ENCODE measurements at regions of chr15 and their contacts with region 1.

Region 1: DNA sequence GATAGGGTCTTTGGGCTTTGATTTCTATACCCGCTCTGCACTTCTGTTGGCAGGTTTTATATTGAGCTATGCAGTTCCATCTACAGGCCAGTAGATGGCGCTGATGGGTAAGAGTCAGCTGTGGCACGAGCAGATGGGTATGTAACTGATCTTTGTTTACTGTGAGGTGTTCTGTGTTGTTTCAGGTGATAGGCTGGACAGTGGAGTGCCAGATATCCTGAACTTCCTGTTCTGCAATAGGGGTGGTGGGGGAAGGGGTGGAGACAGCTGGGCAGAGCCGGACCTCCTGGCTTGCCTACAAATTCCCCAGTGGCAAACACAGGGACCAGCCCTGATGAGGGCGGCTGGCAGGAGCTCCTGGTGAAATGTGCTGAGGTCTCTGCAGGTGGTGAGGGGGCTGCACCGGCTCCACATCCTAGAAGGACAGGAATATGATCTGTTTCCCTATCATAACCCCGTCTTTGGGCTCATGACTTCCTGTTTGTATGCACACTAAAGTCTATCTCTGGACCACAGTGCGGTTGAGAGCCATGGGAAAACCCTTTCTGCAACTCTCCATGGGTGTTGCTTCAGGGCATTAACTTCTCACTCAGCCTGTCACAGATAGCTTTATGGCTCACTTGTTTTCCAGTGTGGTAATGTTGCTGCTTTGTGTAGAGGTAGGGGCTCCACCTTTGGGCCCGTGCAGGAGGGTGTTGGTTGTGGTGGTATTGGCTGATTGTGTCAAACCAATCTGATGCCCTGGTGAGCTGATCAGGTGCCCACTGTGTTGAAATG is 13.4 kb upstream of the FAM98B start:
- DNase-seq: peak in 8 of 9 experiments; percentile 24 to 84 (median 51)
- ATAC-seq: peak; percentile 99
- H3K4me3 ChIP-seq: no peak overlapping the region
- H3K4me3 Mint-ChIP-seq: no peak overlapping the region
- H3K27ac ChIP-seq: no peak overlapping the region
- H3K27ac Mint-ChIP-seq: no peak overlapping the region
- H3K4me1 ChIP-seq: peaks cover 4% of the 10 kb centered on the region
- H3K4me1 Mint-ChIP-seq: peaks cover 3% of the 10 kb centered on the region
- H3K27me3 ChIP-seq: no peaks in the 10 kb centered on the region
- H3K27me3 Mint-ChIP-seq: peaks cover 28% of the 10 kb centered on the region
- CTCF ChIP-seq: peak; percentile 98

Region 2: GRCh38 chr15:38427380-38427779 is 13.2 kb before region 1 on chr15:
- CTCF ChIA-PET with region 1: interaction called, 23 read pairs
- POLR2A ChIA-PET with region 1: no interaction called
- intact Hi-C with region 1: no loop called
- DNase-seq: peak in 1 of 9 experiments; percentile 2
- ATAC-seq: no peak
- H3K4me3 ChIP-seq: no peak overlapping the region
- H3K4me3 Mint-ChIP-seq: no peak overlapping the region
- H3K27ac ChIP-seq: no peak overlapping the region
- H3K27ac Mint-ChIP-seq: no peak overlapping the region
- H3K4me1 ChIP-seq: no peaks in the 10 kb centered on the region
- H3K4me1 Mint-ChIP-seq: no peaks in the 10 kb centered on the region
- H3K27me3 ChIP-seq: peaks cover 0 to 2% of the 10 kb centered on the region in 2 experiments
- H3K27me3 Mint-ChIP-seq: peaks cover 13% of the 10 kb centered on the region
- CTCF ChIP-seq: no peak

Region 3: DNA sequence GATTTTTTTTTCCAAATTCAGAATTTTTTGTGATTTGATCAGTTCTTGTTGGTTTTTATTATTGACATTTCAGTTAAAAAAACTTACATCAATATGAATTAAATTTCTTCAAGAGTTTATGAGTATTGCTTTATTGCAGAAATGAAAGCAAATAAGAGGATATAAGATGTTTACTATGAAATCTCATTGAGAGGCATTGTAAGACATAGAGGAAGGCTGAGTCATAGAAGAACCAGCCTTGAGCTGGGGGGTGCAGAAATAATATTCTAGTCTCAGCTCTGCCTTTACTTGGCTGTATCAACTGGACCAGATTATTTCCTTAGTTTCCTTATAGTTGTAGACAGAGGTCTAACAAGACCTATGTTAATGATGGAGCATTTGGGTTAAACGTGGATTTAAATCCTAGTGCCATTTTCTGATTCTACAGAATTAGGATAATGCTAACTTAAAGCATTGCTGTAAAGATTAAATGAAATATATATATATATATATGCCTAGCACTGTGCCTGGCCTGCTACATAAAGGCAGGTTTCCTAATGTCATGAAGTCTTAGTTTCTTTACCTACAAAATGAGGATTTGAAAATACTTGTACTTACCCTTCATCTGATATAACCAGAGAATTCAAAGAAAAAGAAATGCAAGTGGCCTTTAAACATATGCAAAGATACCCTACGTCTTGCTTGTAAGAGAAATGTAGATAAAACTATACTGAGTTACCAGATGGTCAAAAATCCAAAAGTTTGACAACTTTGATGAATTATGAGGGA is 20.7 kb after region 1 on chr15:
- CTCF ChIA-PET with region 1: interaction called, 14 read pairs
- POLR2A ChIA-PET with region 1: no interaction called
- intact Hi-C with region 1: no loop called
- DNase-seq: no peak
- ATAC-seq: no peak
- H3K4me3 ChIP-seq: no peak overlapping the region
- H3K4me3 Mint-ChIP-seq: no peak overlapping the region
- H3K27ac ChIP-seq: no peak overlapping the region
- H3K27ac Mint-ChIP-seq: no peak overlapping the region
- H3K4me1 ChIP-seq: peaks cover 11% of the 10 kb centered on the region
- H3K4me1 Mint-ChIP-seq: peaks cover 49% of the 10 kb centered on the region
- H3K27me3 ChIP-seq: no peaks in the 10 kb centered on the region
- H3K27me3 Mint-ChIP-seq: no peaks in the 10 kb centered on the region
- CTCF ChIP-seq: no peak

Region 4: DNA sequence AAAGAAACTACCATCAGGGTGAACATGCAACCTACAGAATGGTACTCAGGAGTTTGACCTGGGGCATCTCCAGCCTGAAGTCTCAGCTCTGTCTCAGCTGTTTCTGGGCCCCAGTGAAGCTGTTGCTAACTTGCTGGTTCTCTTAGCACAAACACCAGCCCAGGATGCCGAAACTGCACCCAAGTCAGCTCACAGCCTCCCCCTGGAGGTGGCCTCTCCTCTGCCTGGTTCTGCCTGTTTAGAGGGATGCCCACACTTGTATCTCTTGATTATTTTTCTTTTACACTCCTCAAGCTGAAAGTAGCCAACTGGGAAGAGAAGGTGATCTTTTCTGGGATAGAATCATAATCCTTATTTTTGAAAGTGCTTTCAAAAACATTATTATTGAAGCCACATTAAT is 413.1 kb after region 1 on chr15:
- CTCF ChIA-PET with region 1: interaction called, 10 read pairs
- POLR2A ChIA-PET with region 1: no interaction called
- intact Hi-C with region 1: loop called in 1 of 2 experiments (anchors 1 kb)
- DNase-seq: peak in 7 of 9 experiments; percentile 2 to 51 (median 31)
- ATAC-seq: no peak
- H3K4me3 ChIP-seq: no peak overlapping the region
- H3K4me3 Mint-ChIP-seq: no peak overlapping the region
- H3K27ac ChIP-seq: no peak overlapping the region
- H3K27ac Mint-ChIP-seq: no peak overlapping the region
- H3K4me1 ChIP-seq: no peaks in the 10 kb centered on the region
- H3K4me1 Mint-ChIP-seq: no peaks in the 10 kb centered on the region
- H3K27me3 ChIP-seq: no peaks in the 10 kb centered on the region
- H3K27me3 Mint-ChIP-seq: peaks cover 23% of the 10 kb centered on the region
- CTCF ChIP-seq: no peak

Region 5: DNA sequence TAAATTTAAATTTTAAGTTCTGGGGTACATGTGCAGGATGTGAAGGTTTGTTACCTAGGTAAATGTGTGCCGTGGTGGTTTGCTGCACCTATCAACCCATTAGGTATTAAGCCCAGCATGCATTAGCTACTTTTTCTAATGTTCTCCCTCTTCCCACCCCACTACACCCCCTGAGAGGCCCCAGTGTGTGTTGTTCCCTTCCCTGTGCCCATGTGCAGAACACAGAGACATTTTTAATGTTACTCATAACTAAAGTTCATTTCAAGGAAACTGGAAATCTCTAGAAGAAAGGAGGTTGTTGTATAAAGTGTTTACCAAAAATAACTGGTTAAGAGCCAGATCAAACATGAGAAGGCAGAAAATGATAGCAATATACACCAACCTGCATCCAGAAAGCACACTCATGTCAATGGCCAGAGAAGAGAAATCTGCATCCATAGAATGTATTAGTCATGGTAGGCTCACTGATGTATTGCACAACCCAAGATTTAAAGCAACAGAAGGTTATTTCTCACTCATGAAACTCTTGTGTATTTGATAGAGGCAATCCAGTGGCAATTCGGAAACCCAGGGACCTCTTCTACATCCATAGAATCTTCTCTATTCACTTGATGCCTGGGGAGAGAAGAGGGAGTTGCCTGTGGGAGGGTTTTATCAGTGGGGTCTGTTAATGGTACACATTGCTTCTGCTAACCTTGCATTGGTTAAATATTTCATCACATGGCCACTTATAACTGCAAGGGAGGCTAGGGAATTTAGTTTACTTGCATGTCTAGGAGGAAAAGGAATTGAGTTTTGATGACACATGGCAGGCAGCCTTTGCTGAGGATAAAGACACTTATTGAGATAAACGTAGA is 446.0 kb after region 1 on chr15:
- CTCF ChIA-PET with region 1: no interaction called
- POLR2A ChIA-PET with region 1: no interaction called
- intact Hi-C with region 1: no loop called
- DNase-seq: no peak
- ATAC-seq: no peak
- H3K4me3 ChIP-seq: no peak overlapping the region
- H3K4me3 Mint-ChIP-seq: no peak overlapping the region
- H3K27ac ChIP-seq: no peak overlapping the region
- H3K27ac Mint-ChIP-seq: no peak overlapping the region
- H3K4me1 ChIP-seq: no peaks in the 10 kb centered on the region
- H3K4me1 Mint-ChIP-seq: peaks cover 7% of the 10 kb centered on the region
- H3K27me3 ChIP-seq: peaks cover 0 to 2% of the 10 kb centered on the region in 2 experiments
- H3K27me3 Mint-ChIP-seq: peaks cover 11% of the 10 kb centered on the region
- CTCF ChIP-seq: no peak

Measured in CD8-positive, alpha-beta T cell (primary cell).